HCT116 (cell line): ENCODE measurements at regions of chr12 and their contacts with region 1.

Region 1: DNA sequence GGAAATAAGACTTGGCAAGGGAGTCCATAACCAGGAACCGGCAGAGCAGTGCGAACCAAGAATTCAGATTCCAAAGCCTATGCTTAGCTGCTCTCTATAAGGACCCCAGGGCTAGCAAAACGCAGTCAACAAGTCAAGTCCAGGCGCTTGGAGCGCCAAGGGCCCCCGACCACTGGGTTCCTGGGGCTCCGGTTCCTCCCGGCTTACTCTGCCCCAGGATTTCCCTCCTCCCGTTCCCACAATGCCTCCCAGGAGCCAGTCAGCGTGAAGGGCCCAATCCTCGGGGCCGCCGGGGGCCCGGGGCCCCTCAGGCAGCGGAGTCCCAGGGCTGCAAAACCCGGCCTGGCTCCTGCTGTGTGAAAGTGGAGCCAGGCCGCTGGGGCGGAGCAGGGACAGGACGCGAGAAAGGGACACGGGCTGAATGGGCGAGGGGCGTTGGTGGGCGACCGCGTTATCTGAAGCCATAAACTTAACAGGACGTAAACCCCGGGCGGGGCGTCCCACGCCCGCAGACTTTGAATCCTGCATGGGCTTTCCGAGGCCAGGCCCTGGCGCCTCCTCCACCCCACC is 1.5 kb downstream of the KRT8 start:
- DNase-seq: no peak
- ATAC-seq: peak; percentile 12
- H3K4me3 ChIP-seq: peak overlapping the region; percentile 91 to 97
- H3K27ac ChIP-seq: peak overlapping the region; percentile 82
- H3K4me1 ChIP-seq: peaks cover 58 to 77% of the 10 kb centered on the region in 2 experiments
- H3K27me3 ChIP-seq: no peaks in the 10 kb centered on the region
- CTCF ChIP-seq: no peak
- POLR2A ChIP-seq: no peak
- RAD21 ChIP-seq: no peak

Region 2: DNA sequence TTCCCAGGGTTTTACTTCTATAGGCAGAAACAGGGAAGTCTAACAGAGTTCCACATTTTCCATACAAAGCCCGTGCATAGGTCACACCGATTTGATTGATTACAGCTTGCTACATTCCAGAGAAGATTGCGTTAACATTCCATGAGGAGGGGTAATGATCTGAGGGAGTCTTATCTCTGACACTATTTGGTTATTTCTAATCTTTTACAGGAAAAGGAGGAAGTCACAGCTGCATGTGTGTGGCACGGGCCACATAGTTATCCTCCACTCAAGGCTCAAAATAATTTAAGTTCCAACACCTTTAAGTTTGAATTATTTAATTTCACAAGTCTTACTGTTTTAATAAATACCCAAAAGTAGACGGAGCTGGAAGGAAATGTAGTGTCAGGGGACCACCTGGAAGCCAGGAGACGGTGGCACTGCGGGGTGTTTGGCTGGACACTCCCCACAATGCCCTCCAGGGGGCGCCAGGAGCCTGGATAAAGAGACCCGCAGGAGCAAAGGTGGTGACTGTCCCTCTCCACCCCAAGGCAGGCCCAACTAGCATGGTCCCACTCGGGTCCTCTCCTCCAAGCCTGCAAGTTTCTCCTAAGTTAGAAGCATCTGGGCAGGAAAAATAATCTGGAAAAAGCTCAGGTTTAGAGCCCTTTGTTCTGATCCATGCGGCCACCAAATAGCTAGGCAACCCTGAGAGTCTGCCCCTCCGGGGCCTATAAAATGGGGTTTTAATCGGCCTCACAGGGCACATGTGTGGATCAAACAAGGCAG is 18.7 kb before region 1 on chr12:
- CTCF ChIA-PET with region 1: interaction called, 29 read pairs
- POLR2A ChIA-PET with region 1: interaction called, 28 read pairs
- RAD21 ChIA-PET with region 1: interaction called, 5 to 9 read pairs
- intact Hi-C with region 1: no loop called
- DNase-seq: no peak
- ATAC-seq: peak; percentile 85
- H3K4me3 ChIP-seq: no peak overlapping the region
- H3K27ac ChIP-seq: no peak overlapping the region
- H3K4me1 ChIP-seq: peaks cover 16 to 35% of the 10 kb centered on the region in 2 experiments; a peak in 3 of 4 replicates
- H3K27me3 ChIP-seq: no peaks in the 10 kb centered on the region
- CTCF ChIP-seq: peak; percentile 87 to 99 (median 97)
- POLR2A ChIP-seq: no peak
- RAD21 ChIP-seq: peak; percentile 100

Region 3: DNA sequence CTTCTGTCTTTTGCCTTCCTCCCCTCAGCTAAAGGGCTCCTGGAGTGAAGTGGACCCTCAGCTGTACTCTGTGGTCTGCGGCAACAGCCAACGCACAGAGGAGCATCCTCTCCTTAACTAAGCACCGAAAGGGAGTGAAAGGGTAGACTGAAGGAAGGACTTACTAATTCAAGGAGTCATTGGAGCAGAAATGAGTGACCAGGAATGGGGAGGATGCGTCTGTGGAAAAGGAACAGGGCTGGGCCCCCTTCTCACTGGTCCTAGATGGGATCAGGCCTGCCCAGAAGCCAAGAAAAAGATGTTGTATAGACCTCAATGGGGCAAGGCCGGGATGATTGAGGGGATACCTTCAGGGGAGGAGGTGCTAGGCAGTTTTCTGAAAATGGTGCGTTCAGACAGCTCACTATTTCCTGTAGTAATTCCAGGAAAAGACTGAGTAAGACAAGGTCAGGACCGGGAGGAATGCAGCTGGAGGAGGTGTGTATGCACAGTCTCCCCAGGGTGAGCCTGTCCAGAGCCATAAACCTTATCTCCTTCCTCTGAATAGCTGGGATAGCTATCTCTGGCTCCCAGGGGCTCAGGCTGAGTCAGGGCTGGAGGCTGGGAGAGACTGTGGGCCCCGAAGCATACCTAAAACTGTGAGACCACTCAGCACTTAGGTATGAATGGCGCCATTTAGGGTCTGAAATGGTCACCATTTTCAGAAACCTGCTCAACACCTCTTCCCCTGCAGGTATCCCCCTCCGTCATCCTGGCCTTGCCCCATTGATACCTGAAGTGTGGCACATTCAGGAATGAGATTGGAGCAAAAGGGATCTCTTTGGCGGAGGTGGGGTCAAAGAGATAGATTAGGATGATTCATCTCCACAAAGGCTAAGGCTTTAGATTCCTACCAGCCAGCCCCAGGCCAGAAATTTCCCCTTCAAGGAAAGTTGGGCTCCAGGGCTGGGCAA is 21.7 kb after region 1 on chr12:
- CTCF ChIA-PET with region 1: interaction called, 16 read pairs
- POLR2A ChIA-PET with region 1: interaction called, 262 read pairs
- RAD21 ChIA-PET with region 1: interaction called, 19 to 28 read pairs
- intact Hi-C with region 1: loop called (anchors 1 kb)
- DNase-seq: peak; percentile 90
- ATAC-seq: peak; percentile 68
- H3K4me3 ChIP-seq: peak overlapping the region; percentile 6 to 51
- H3K27ac ChIP-seq: peak overlapping the region; percentile 95
- H3K4me1 ChIP-seq: peaks cover 67 to 94% of the 10 kb centered on the region in 2 experiments
- H3K27me3 ChIP-seq: no peaks in the 10 kb centered on the region
- CTCF ChIP-seq: no peak
- POLR2A ChIP-seq: no peak
- RAD21 ChIP-seq: no peak

Region 4: DNA sequence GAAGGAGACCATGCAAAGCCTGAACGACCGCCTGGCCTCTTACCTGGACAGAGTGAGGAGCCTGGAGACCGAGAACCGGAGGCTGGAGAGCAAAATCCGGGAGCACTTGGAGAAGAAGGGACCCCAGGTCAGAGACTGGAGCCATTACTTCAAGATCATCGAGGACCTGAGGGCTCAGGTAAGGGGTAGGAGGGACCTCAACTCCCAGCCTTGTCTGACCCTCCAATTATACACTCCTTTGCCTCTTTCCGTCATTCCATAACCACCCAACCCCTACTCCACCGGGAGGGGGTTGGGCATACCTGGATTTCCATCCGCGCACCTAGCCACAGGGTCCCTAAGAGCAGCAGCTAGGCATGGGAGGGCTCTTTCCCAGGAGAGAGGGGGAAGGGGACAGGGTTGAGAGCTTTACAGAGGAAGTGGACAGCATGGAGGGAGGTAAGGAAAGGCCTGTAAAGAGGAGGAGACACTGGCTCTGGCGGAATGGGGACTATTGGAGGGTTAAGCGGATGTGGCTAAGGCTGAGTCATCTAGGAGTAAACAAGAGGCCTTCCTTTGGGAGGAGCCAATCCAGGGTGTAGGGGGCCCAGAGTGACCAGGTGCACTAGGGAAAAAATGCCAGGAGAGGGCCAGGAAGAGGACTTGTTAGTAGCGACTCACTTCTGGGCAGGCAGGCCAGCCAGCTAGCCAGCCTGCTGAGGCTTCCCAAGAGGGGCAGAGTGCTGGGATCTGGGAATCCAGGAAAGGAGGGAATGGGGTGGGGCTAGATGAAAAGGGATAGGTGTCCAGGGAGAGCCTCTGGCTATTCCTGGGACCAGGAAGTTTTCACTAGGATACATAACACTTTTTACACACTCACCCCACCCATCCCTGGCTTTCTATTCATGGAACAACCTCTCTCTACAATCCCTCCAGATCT is 46.3 kb after region 1 on chr12:
- CTCF ChIA-PET with region 1: interaction called, 9 read pairs
- POLR2A ChIA-PET with region 1: interaction called, 379 read pairs
- RAD21 ChIA-PET with region 1: interaction called, 6 to 8 read pairs
- intact Hi-C with region 1: loop called (anchors 1 kb)
- DNase-seq: peak; percentile 84
- ATAC-seq: peak; percentile 61
- H3K4me3 ChIP-seq: peak overlapping the region; percentile 72 to 96
- H3K27ac ChIP-seq: peak overlapping the region; percentile 78
- H3K4me1 ChIP-seq: peaks cover 66 to 87% of the 10 kb centered on the region in 2 experiments
- H3K27me3 ChIP-seq: no peaks in the 10 kb centered on the region
- CTCF ChIP-seq: no peak
- POLR2A ChIP-seq: peak; percentile 90
- RAD21 ChIP-seq: no peak

Region 5: GRCh38 chr12:52956987-52957386 is 53.6 kb after region 1 on chr12:
- CTCF ChIA-PET with region 1: interaction called, 11 read pairs
- POLR2A ChIA-PET with region 1: interaction called, 379 read pairs
- RAD21 ChIA-PET with region 1: interaction called, 6 to 8 read pairs
- intact Hi-C with region 1: loop called (anchors 2 kb)
- DNase-seq: no peak
- ATAC-seq: no peak
- H3K4me3 ChIP-seq: no peak overlapping the region
- H3K27ac ChIP-seq: no peak overlapping the region
- H3K4me1 ChIP-seq: peaks cover 22 to 42% of the 10 kb centered on the region in 2 experiments
- H3K27me3 ChIP-seq: no peaks in the 10 kb centered on the region
- CTCF ChIP-seq: no peak
- POLR2A ChIP-seq: no peak
- RAD21 ChIP-seq: no peak

Region 6: DNA sequence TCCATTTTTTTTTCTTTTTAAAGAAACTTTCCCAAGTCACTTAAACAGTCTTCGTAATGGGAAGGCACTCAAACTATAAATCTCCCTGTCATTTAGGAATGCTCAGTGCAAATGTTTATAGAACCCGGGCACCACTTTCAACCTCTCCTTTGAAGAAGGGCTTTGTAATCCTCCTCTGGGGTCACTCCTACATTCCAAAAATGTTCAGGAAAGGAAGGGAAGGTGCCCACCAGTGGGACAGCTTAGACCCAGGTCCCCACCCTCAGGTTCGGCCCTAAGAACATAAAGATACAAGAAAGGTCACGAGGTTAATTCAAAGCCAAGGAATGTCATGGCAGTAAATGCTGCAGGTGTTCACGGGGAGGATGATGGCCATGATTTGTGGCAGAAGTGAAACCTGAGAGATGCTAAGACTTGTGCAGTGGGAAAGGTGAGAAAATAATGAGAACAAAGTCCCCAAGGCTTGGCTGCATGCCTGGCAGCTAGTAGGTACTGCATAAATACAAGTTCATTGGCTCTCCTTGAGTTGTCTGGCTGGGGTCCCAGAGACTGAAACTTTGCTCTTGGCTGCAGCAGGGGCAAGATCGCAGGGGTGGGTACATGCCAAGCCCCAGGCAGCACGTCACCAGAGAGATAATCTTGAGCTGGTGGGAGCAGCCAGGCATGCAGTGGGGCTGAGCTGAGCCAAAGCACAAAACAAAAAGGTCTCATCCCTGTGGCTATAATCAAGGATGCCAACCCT is 66.6 kb after region 1 on chr12:
- CTCF ChIA-PET with region 1: interaction called, 8 read pairs
- POLR2A ChIA-PET with region 1: interaction called, 63 read pairs
- RAD21 ChIA-PET with region 1: interaction called in 1 of 2 experiments, 4 read pairs
- intact Hi-C with region 1: no loop called
- DNase-seq: no peak
- ATAC-seq: peak; percentile 48
- H3K4me3 ChIP-seq: peak overlapping the region; percentile 9 to 14; a peak in 1 of 4 replicates
- H3K27ac ChIP-seq: peak overlapping the region; percentile 81
- H3K4me1 ChIP-seq: peaks cover 60 to 62% of the 10 kb centered on the region in 2 experiments
- H3K27me3 ChIP-seq: no peaks in the 10 kb centered on the region
- CTCF ChIP-seq: no peak
- POLR2A ChIP-seq: no peak
- RAD21 ChIP-seq: no peak; the same call in 1 of the 2 replicates